ENCODE measurements at regions of chr12 and their contacts with region 1.

Region 1: GRCh38 chr12:55142669-55143565 is 16.7 kb downstream of the OR9K2 start:
- DNase-seq: peak; percentile 51 to 59
- H3K4me3 ChIP-seq: no peak overlapping the region
- H3K4me3 Mint-ChIP-seq: no peak overlapping the region
- H3K27ac Mint-ChIP-seq: no peak overlapping the region
- H3K4me1 ChIP-seq: no peaks in the 10 kb centered on the region
- H3K4me1 Mint-ChIP-seq: no peaks in the 10 kb centered on the region
- H3K27me3 ChIP-seq: no peaks in the 10 kb centered on the region; the same call in 1 of the 2 replicates
- H3K27me3 Mint-ChIP-seq: peaks cover 4% of the 10 kb centered on the region
- CTCF ChIP-seq: peak; percentile 56 to 78

Region 2: DNA sequence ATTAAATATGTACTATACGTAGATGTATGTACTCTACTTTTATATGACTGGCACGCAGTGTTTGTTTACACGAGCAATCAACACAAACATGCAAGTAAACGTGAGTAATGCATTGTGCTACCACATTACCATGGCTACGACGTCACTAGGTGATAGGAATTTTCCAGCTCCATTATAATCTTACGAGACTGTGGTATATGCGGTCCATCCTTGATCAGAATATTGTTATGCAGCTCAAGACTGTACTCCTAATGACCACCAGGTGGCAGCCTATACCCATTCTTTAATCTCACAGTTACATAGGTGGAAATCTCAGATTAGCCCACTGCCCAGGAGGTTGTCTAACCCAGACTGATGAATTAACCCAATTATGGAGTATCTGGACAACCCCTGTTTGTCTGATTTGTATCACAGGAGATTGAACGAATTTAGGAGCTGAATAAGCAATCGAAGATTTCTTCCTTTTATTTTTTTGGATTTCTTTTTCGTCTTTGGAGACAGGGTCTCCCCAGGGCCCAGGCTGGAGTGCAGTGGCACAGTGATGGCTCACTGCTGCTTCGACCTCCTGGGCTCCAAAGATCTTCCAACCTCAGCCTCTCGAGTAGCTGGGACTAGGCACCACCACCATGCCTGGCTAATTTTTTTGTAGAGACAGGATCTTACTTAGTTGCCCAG is 149.6 kb before region 1 on chr12:
- CTCF ChIA-PET with region 1: interaction called, 5 read pairs
- POLR2A ChIA-PET with region 1: interaction called, 10 read pairs
- intact Hi-C with region 1: loop called (anchors 1 kb)
- DNase-seq: peak; percentile 47 to 55
- H3K4me3 ChIP-seq: no peak overlapping the region
- H3K4me3 Mint-ChIP-seq: no peak overlapping the region
- H3K27ac Mint-ChIP-seq: no peak overlapping the region
- H3K4me1 ChIP-seq: no peaks in the 10 kb centered on the region
- H3K4me1 Mint-ChIP-seq: no peaks in the 10 kb centered on the region
- H3K27me3 ChIP-seq: no peaks in the 10 kb centered on the region; the same call in 1 of the 2 replicates
- H3K27me3 Mint-ChIP-seq: peaks cover 25% of the 10 kb centered on the region
- CTCF ChIP-seq: peak; percentile 69

Region 3: GRCh38 chr12:55008944-55009585 is 133.9 kb before region 1 on chr12:
- CTCF ChIA-PET with region 1: no interaction called
- POLR2A ChIA-PET with region 1: no interaction called
- intact Hi-C with region 1: no loop called
- DNase-seq: no peak
- H3K4me3 ChIP-seq: no peak overlapping the region
- H3K4me3 Mint-ChIP-seq: no peak overlapping the region
- H3K27ac Mint-ChIP-seq: no peak overlapping the region
- H3K4me1 ChIP-seq: no peaks in the 10 kb centered on the region
- H3K4me1 Mint-ChIP-seq: no peaks in the 10 kb centered on the region
- H3K27me3 ChIP-seq: no peaks in the 10 kb centered on the region
- H3K27me3 Mint-ChIP-seq: peaks cover 4% of the 10 kb centered on the region
- CTCF ChIP-seq: no peak

Region 4: GRCh38 chr12:55019779-55020178 is 123.1 kb before region 1 on chr12 and contains the start of gene NEUROD4:
- CTCF ChIA-PET with region 1: no interaction called
- POLR2A ChIA-PET with region 1: no interaction called
- intact Hi-C with region 1: no loop called
- DNase-seq: peak; percentile 69 to 73
- H3K4me3 ChIP-seq: no peak within 1 kb of the TSS
- H3K4me3 Mint-ChIP-seq: no peak within 1 kb of the TSS
- H3K27ac Mint-ChIP-seq: no peak within 1 kb of the TSS
- H3K4me1 ChIP-seq: no peaks in the 10 kb centered on the region
- H3K4me1 Mint-ChIP-seq: peaks cover 8% of the 10 kb centered on the region
- H3K27me3 ChIP-seq: no peaks in the 10 kb centered on the region
- H3K27me3 Mint-ChIP-seq: peaks cover 9% of the 10 kb centered on the region
- CTCF ChIP-seq: no peak
- total RNA-seq, gene NEUROD4: not detected in 2 replicates

Region 5: DNA sequence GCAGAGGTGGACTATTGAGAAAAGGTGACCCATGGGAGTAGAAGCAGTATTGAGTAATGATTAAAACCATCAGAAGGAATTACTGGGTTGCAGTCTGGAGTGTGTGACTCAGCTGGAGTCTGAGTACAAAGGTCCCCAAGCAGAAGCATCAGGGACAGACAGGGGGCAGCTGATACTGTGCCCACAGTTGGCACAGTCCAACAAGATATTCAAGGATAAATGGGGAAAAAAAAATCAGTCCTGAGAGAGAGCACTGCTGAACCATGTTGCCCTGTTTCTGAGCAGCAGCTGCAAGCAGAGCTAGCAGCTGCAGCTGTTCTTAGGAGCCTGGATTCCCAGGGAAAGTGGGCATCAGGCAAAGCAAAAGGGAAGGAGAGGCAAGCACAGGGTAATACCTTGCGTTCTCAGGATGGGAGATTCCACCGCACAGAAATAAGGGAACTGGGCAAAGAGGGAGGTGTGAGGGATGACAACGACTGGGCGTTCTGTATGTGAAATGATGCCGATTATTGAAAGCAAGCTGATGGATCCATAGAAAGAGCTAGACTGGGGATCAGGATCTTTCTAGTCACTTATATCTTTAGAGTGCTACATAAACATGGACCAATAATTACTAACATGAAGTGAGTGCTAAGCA is 105.4 kb before region 1 on chr12:
- CTCF ChIA-PET with region 1: no interaction called
- POLR2A ChIA-PET with region 1: no interaction called
- intact Hi-C with region 1: no loop called
- DNase-seq: no peak
- H3K4me3 ChIP-seq: no peak overlapping the region
- H3K4me3 Mint-ChIP-seq: no peak overlapping the region
- H3K27ac Mint-ChIP-seq: no peak overlapping the region
- H3K4me1 ChIP-seq: no peaks in the 10 kb centered on the region; the same call in 1 of the 2 replicates
- H3K4me1 Mint-ChIP-seq: no peaks in the 10 kb centered on the region
- H3K27me3 ChIP-seq: peaks cover 1% of the 10 kb centered on the region
- H3K27me3 Mint-ChIP-seq: peaks cover 20% of the 10 kb centered on the region
- CTCF ChIP-seq: no peak

Region 6: DNA sequence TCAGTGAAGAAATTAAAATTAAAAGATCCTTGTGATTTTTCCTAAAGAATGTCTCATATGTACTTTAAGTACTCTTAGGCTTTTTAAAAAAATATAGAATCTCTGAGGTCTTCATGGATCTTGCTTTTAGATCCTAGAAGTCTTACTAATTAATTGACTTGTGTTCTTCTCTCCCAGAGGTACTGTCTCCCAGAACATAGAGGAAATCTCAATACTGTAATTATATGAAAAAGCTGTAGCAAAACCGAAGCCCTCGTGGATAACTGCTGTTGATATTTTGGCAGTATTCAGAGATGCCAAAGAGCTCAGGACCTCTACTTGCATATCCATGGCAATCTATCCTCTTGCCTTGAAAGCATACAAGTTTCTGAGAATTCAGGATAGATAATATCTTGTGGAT is 16.8 kb before region 1 on chr12 and contains the start of gene OR9K2:
- CTCF ChIA-PET with region 1: no interaction called
- POLR2A ChIA-PET with region 1: no interaction called
- intact Hi-C with region 1: no loop called
- DNase-seq: no peak
- H3K4me3 ChIP-seq: no peak within 1 kb of the TSS
- H3K4me3 Mint-ChIP-seq: no peak within 1 kb of the TSS
- H3K27ac Mint-ChIP-seq: no peak within 1 kb of the TSS
- H3K4me1 ChIP-seq: no peaks in the 10 kb centered on the region
- H3K4me1 Mint-ChIP-seq: no peaks in the 10 kb centered on the region
- H3K27me3 ChIP-seq: no peaks in the 10 kb centered on the region
- H3K27me3 Mint-ChIP-seq: peaks cover 11% of the 10 kb centered on the region
- CTCF ChIP-seq: no peak
- total RNA-seq, gene OR9K2: not detected in 2 replicates